Activated CD4-positive, alpha-beta T cell treated with anti-CD3 and anti-CD28 coated beads, Interleukin-2, amount 10 ng/mL, durations not matched to agents 7 days and 5 days (primary cell): ENCODE measurements at regions of chr5 and their contacts with region 1.

Region 1: DNA sequence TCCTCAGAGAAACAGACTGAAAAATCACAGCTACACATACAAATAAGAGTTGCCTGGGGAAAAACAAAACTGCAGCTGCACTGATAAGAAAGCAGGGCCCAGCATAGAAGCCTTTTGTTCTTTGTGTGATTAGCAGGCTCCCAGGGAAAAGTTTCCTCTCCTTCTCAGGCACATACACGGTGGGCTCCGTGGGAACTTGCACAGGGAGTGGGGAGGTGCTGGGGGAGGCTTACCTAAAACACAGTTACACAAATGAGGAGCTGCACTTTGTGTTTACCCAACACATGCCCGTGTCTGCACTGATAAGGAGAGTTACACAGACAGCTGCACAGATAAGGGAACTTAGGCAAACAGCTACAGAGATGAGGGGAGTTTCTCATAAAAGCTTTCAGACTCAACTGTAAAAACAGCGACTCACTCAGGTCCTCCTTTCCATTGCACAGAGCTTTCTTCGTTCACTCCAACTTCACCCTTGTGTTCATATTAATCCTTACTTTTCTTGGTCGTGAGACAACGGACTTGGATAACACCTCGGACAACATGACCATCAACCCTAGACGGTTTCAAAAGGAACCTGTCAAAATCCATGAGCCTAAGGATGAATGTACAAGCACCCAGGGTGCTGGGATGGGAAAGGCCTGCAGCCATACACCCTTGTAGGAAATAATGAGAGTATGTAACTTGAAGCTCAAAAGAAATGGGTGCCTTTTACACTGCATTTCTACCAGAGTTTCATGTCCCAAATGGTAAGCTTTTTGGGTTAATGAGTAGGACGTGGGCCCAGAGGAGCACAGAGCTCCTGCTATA is 50.8 kb downstream of the SERINC5 start:
- DNase-seq: no peak
- H3K4me3 Mint-ChIP-seq: no peak overlapping the region
- H3K27ac Mint-ChIP-seq: peak overlapping the region; percentile 58
- H3K4me1 Mint-ChIP-seq: peaks cover 54% of the 10 kb centered on the region
- H3K27me3 Mint-ChIP-seq: no peaks in the 10 kb centered on the region

Region 2: GRCh38 chr5:80093796-80094195 is 111.2 kb before region 1 on chr5:
- CTCF ChIA-PET with region 1: no interaction called
- POLR2A ChIA-PET with region 1: no interaction called
- DNase-seq: no peak
- H3K4me3 Mint-ChIP-seq: no peak overlapping the region
- H3K27ac Mint-ChIP-seq: peak overlapping the region; percentile 88
- H3K4me1 Mint-ChIP-seq: peaks cover 34% of the 10 kb centered on the region
- H3K27me3 Mint-ChIP-seq: no peaks in the 10 kb centered on the region

Region 3: GRCh38 chr5:80186616-80187015 is 18.4 kb before region 1 on chr5:
- CTCF ChIA-PET with region 1: interaction called, 36 read pairs
- POLR2A ChIA-PET with region 1: no interaction called
- DNase-seq: peak; percentile 32
- H3K4me3 Mint-ChIP-seq: peak overlapping the region; percentile 17
- H3K27ac Mint-ChIP-seq: peak overlapping the region; percentile 83
- H3K4me1 Mint-ChIP-seq: peaks cover 88% of the 10 kb centered on the region
- H3K27me3 Mint-ChIP-seq: no peaks in the 10 kb centered on the region

Region 4: GRCh38 chr5:80191991-80192398 is 13.0 kb before region 1 on chr5:
- CTCF ChIA-PET with region 1: interaction called, 36 read pairs
- POLR2A ChIA-PET with region 1: no interaction called
- DNase-seq: peak; percentile 63
- H3K4me3 Mint-ChIP-seq: peak overlapping the region; percentile 63
- H3K27ac Mint-ChIP-seq: peak overlapping the region; percentile 94
- H3K4me1 Mint-ChIP-seq: peaks cover 86% of the 10 kb centered on the region
- H3K27me3 Mint-ChIP-seq: no peaks in the 10 kb centered on the region